ENCODE measurements at regions of chr6 and their contacts with region 1.

Region 1: GRCh38 chr6:27687154-27688013 is 214.5 kb upstream of the ZNF184 start:
- DNase-seq: peak; percentile 57 to 79 (median 65)
- ATAC-seq: peak; percentile 81
- H3K4me3 ChIP-seq: peak overlapping the region; percentile 88
- H3K4me3 Mint-ChIP-seq: peak overlapping the region; percentile 87 to 96 (median 94)
- H3K27ac ChIP-seq: peak overlapping the region; percentile 61
- H3K27ac Mint-ChIP-seq: peak overlapping the region; percentile 86 to 100 (median 97)
- H3K4me1 ChIP-seq: peaks cover 4 to 6% of the 10 kb centered on the region in 2 donors
- H3K4me1 Mint-ChIP-seq: peaks cover 7 to 40% (median 27%) of the 10 kb centered on the region in 7 donors
- H3K27me3 ChIP-seq: no peaks in the 10 kb centered on the region
- H3K27me3 Mint-ChIP-seq: peaks cover 5 to 34% (median 5%) of the 10 kb centered on the region in 5 donors

Region 2: DNA sequence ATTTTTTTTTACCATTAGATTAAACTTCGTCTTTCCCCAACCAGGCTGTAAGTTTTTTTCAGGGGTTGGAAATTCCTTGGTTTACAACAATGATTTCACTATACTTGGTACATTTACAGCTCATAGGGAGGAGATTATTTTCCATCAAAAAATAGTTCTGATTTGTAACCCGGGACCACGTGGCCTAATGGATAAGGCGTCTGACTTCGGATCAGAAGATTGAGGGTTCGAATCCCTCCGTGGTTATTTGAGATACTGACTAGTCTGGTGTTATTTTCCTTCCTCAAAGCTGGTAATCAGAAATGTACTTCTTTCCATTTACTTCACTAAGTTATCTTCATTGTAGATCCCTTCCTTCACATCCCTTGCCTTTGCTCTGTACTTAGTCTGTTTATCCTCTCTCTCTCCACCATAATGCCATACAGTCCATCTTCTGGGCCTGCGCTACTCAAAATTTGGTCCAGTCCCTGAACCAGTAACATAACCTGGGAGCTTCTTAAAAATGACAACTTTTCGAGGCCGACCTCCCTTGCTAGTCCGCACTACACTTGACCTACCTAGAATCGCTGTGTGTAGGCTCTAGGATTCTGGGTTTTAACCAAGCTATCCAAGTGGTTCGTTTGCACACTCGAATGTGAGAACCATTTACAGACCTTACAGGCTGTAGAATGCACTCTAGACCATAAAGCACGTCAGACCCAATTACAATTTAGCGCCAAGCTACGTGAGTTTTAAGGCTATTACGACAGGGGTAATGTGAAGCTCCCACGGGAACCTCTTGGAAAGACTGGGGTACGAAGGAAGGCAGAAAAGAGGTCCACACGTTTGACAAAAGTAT is 1364.5 kb before region 1 on chr6:
- CTCF ChIA-PET with region 1: no interaction called
- POLR2A ChIA-PET with region 1: no interaction called
- intact Hi-C with region 1: loop called in 1 of 2 experiments (anchors 10 kb)
- DNase-seq: peak in 8 of 9 donors; percentile 67 to 85 (median 79)
- ATAC-seq: peak; percentile 72
- H3K4me3 ChIP-seq: peak overlapping the region; percentile 82
- H3K4me3 Mint-ChIP-seq: peak overlapping the region; percentile 64 to 92 (median 88)
- H3K27ac ChIP-seq: peak overlapping the region; percentile 60
- H3K27ac Mint-ChIP-seq: peak overlapping the region; percentile 44 to 93 (median 89)
- H3K4me1 ChIP-seq: peaks cover 5 to 8% of the 10 kb centered on the region in 2 donors
- H3K4me1 Mint-ChIP-seq: peaks cover 2 to 58% (median 36%) of the 10 kb centered on the region in 7 donors
- H3K27me3 ChIP-seq: no peaks in the 10 kb centered on the region
- H3K27me3 Mint-ChIP-seq: peaks cover 5 to 21% (median 17%) of the 10 kb centered on the region in 5 donors

Region 3: GRCh38 chr6:27312146-27312949 is 375.0 kb before region 1 on chr6 and contains the start of gene POM121L2:
- CTCF ChIA-PET with region 1: no interaction called
- POLR2A ChIA-PET with region 1: no interaction called
- intact Hi-C with region 1: loop called (anchors 1 to 5 kb)
- DNase-seq: peak in 8 of 9 donors; percentile 26 to 61 (median 56)
- ATAC-seq: peak; percentile 66
- H3K4me3 ChIP-seq: peak within 1 kb of the TSS; percentile 80
- H3K4me3 Mint-ChIP-seq: peak within 1 kb of the TSS; percentile 76 to 86 (median 83)
- H3K27ac ChIP-seq: no peak within 1 kb of the TSS
- H3K27ac Mint-ChIP-seq: peak within 1 kb of the TSS in 2 of 9 donors; percentile 15 to 25
- H3K4me1 ChIP-seq: peaks cover 0 to 6% of the 10 kb centered on the region in 2 donors
- H3K4me1 Mint-ChIP-seq: peaks cover 0 to 13% (median 4%) of the 10 kb centered on the region in 7 donors
- H3K27me3 ChIP-seq: peaks cover 4 to 14% of the 10 kb centered on the region in 2 donors
- H3K27me3 Mint-ChIP-seq: peaks cover 63 to 81% (median 73%) of the 10 kb centered on the region in 5 donors
- total RNA-seq, gene POM121L2: not detected

Region 4: DNA sequence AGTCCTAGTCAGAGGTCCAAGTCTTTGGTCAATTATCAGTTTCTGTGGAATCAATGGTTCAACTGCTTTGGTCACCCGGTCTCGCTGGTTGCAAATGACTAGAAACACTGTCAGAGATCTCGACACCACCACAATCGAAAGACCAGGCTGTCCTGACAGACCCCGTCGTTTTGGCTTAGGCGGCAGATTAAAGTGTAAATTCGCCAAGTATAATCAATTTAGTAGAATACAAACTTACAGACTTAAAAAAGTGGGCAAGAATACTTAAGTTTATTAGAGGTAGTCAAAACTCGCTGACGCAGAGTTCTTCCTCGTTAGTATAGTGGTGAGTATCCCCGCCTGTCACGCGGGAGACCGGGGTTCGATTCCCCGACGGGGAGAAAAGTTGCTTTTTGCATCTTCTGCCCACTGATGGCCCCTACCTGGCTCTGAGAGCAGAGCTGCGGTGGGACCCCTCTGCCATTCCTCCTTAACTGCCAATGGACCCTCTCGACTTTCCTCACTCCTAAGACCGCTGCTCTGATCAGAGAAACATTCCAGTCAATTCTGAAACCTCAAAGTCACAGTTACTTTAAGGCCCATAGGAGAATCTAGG is 183.9 kb before region 1 on chr6:
- CTCF ChIA-PET with region 1: no interaction called
- POLR2A ChIA-PET with region 1: interaction called, 6 read pairs
- intact Hi-C with region 1: loop called in 1 of 2 experiments (anchors 1 kb)
- DNase-seq: peak; percentile 73 to 86 (median 80)
- ATAC-seq: peak; percentile 75
- H3K4me3 ChIP-seq: peak overlapping the region; percentile 61
- H3K4me3 Mint-ChIP-seq: peak overlapping the region; percentile 85 to 99 (median 91)
- H3K27ac ChIP-seq: peak overlapping the region; percentile 57
- H3K27ac Mint-ChIP-seq: peak overlapping the region; percentile 82 to 97 (median 91)
- H3K4me1 ChIP-seq: peaks cover 6% of the 10 kb centered on the region in 2 donors
- H3K4me1 Mint-ChIP-seq: peaks cover 15 to 41% (median 36%) of the 10 kb centered on the region in 7 donors
- H3K27me3 ChIP-seq: no peaks in the 10 kb centered on the region
- H3K27me3 Mint-ChIP-seq: peaks cover 5 to 62% (median 11%) of the 10 kb centered on the region in 5 donors

Region 5: DNA sequence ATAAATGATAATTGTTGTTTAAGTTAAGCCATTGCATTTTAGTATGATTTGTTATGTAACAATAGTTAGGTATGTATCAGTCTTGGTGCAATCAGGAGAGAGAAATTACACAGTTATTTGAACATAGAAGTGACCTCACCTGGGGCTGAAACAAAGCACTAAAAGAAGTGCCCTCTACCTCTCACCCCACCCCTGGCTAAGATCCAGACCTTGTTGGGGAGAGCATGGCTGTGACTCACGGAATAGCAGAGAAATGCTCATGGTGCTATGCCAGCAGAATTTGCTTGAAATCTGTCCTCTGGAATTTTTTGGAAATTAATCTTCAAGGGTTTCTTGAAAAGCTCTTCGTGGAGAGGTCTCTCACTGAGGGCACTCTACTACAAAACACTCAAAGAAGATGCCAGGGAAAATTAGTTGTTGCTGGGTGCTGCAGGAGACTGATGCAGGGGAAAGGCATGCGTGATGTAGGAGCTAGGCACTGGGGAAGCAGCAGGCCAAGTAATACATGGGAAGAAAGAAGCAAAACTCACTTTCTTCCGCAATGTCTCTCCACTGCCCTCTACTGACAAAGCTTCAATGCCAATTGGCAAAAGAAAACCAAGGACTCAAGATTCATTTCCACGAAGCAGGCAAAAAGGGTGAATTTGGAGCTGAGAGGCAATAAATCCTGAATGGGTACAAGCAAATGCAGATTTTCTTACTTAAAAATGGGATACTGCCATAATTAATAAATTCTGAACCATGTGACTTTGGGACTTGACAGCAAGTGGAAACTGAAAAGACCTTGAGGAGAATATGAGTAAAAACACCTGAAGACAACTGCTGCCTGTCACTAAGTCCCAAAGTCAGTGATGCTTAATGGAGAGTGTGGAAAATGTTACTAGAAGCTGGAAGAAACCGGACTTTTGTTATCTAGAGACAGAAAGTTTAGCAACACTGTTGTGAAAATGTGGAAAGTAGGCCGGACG is 78.2 kb before region 1 on chr6:
- CTCF ChIA-PET with region 1: no interaction called
- POLR2A ChIA-PET with region 1: no interaction called
- intact Hi-C with region 1: loop called in 1 of 2 experiments (anchors 5 kb)
- DNase-seq: peak in 2 of 9 donors; percentile 19 to 33
- ATAC-seq: no peak
- H3K4me3 ChIP-seq: no peak overlapping the region
- H3K4me3 Mint-ChIP-seq: no peak overlapping the region
- H3K27ac ChIP-seq: no peak overlapping the region
- H3K27ac Mint-ChIP-seq: no peak overlapping the region
- H3K4me1 ChIP-seq: no peaks in the 10 kb centered on the region
- H3K4me1 Mint-ChIP-seq: peaks cover 0 to 17% (median 9%) of the 10 kb centered on the region in 7 donors
- H3K27me3 ChIP-seq: peaks cover 7 to 11% of the 10 kb centered on the region in 2 donors
- H3K27me3 Mint-ChIP-seq: peaks cover 44 to 73% (median 60%) of the 10 kb centered on the region in 5 donors

Region 6: DNA sequence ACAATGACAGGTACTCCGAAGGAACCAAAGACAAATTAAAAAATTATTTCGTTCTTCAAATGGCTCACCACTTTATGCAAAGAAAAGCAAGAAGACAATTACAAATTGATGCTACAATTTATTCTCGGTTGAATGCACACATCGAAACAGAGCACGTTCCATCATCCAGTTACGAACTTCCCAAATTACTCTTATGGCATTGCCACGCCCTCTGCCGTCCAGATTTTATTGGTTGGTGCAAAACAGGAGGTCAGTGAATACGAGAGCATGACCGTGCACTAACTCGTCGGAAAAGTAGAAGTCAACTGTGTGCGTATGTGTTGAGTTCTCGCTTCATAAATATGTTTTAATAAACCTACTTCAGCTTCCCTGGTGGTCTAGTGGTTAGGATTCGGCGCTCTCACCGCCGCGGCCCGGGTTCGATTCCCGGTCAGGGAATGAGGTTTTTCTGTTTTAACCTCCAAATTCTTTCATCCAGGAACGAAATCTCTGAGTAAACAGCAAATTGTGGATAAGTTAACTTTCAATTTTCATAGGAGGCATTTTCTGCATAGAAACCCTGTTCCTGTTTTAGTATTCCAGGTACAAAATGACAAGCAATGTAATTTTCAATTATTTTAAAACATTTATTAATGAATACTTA is 1294.6 kb after region 1 on chr6:
- CTCF ChIA-PET with region 1: no interaction called
- POLR2A ChIA-PET with region 1: no interaction called
- intact Hi-C with region 1: loop called in 1 of 2 experiments (anchors 5 kb)
- DNase-seq: peak; percentile 48 to 89 (median 86)
- ATAC-seq: peak; percentile 81
- H3K4me3 ChIP-seq: peak overlapping the region; percentile 99
- H3K4me3 Mint-ChIP-seq: peak overlapping the region; percentile 85 to 100 (median 92)
- H3K27ac ChIP-seq: peak overlapping the region; percentile 47
- H3K27ac Mint-ChIP-seq: peak overlapping the region; percentile 87 to 100 (median 99)
- H3K4me1 ChIP-seq: peaks cover 7 to 18% of the 10 kb centered on the region in 2 donors
- H3K4me1 Mint-ChIP-seq: peaks cover 30 to 80% (median 66%) of the 10 kb centered on the region in 7 donors
- H3K27me3 ChIP-seq: no peaks in the 10 kb centered on the region
- H3K27me3 Mint-ChIP-seq: peaks cover 14 to 61% (median 36%) of the 10 kb centered on the region in 5 donors

Measured in naive thymus-derived CD4-positive, alpha-beta T cell (primary cell).